ENCODE measurements at regions of chr4 and their contacts with region 1.

Region 1: GRCh38 chr4:102535398-102536082 is 34.4 kb downstream of the NFKB1 start:
- DNase-seq: peak in 1 of 9 experiments; percentile 55
- ATAC-seq: peak; percentile 77
- H3K4me3 ChIP-seq: no peak overlapping the region
- H3K4me3 Mint-ChIP-seq: no peak overlapping the region
- H3K27ac ChIP-seq: no peak overlapping the region
- H3K27ac Mint-ChIP-seq: no peak overlapping the region
- H3K4me1 ChIP-seq: peaks cover 42% of the 10 kb centered on the region
- H3K4me1 Mint-ChIP-seq: peaks cover 55% of the 10 kb centered on the region
- H3K27me3 ChIP-seq: no peaks in the 10 kb centered on the region
- H3K27me3 Mint-ChIP-seq: no peaks in the 10 kb centered on the region
- CTCF ChIP-seq: no peak

Region 2: DNA sequence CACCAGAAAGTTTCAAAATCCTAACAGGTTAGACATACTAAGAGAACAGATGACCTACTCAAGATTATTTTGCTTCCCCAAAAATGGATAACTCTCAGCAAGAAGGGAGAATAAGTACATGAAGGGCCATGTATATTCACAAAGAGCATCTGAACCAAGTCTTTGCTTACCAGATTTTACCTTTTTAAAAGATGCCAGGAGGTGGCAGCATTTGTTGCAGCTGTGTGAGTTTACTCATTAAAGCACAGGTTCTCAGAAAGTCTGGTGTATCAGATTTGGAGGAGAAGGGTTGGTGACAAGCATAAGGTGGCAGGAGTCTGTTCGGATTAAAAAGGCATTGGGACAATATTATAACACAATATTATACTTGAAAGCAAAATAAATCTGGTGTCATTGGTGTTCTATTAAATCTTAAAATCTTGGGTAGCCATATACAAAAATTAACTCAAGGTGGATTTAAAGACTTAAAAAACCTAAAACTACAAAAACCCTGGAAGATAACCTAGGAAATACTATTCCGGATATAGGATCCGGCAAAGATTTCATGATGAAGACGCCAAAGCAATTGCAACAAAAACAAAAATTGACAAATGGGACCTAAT is 85.7 kb before region 1 on chr4:
- CTCF ChIA-PET with region 1: interaction called, 3 read pairs
- POLR2A ChIA-PET with region 1: no interaction called
- intact Hi-C with region 1: loop called (anchors 5 kb)
- DNase-seq: peak; percentile 21 to 82 (median 48)
- ATAC-seq: peak; percentile 89
- H3K4me3 ChIP-seq: no peak overlapping the region
- H3K4me3 Mint-ChIP-seq: no peak overlapping the region
- H3K27ac ChIP-seq: no peak overlapping the region
- H3K27ac Mint-ChIP-seq: no peak overlapping the region
- H3K4me1 ChIP-seq: no peaks in the 10 kb centered on the region
- H3K4me1 Mint-ChIP-seq: peaks cover 10% of the 10 kb centered on the region
- H3K27me3 ChIP-seq: no peaks in the 10 kb centered on the region
- H3K27me3 Mint-ChIP-seq: no peaks in the 10 kb centered on the region
- CTCF ChIP-seq: peak; percentile 83

Region 3: GRCh38 chr4:102525097-102525496 is 10.4 kb before region 1 on chr4:
- CTCF ChIA-PET with region 1: interaction called, 3 read pairs
- POLR2A ChIA-PET with region 1: no interaction called
- intact Hi-C with region 1: loop called in 1 of 2 experiments (anchors 1 kb)
- DNase-seq: peak in 1 of 9 experiments; percentile 51
- ATAC-seq: no peak
- H3K4me3 ChIP-seq: no peak overlapping the region
- H3K4me3 Mint-ChIP-seq: no peak overlapping the region
- H3K27ac ChIP-seq: no peak overlapping the region
- H3K27ac Mint-ChIP-seq: peak overlapping the region; percentile 49
- H3K4me1 ChIP-seq: peaks cover 80% of the 10 kb centered on the region
- H3K4me1 Mint-ChIP-seq: peaks cover 92% of the 10 kb centered on the region
- H3K27me3 ChIP-seq: no peaks in the 10 kb centered on the region
- H3K27me3 Mint-ChIP-seq: no peaks in the 10 kb centered on the region
- CTCF ChIP-seq: no peak

Measured in CD8-positive, alpha-beta T cell (primary cell).